WTC11 (cell line): ENCODE measurements at regions of chr3 and their contacts with region 1.

Region 1: DNA sequence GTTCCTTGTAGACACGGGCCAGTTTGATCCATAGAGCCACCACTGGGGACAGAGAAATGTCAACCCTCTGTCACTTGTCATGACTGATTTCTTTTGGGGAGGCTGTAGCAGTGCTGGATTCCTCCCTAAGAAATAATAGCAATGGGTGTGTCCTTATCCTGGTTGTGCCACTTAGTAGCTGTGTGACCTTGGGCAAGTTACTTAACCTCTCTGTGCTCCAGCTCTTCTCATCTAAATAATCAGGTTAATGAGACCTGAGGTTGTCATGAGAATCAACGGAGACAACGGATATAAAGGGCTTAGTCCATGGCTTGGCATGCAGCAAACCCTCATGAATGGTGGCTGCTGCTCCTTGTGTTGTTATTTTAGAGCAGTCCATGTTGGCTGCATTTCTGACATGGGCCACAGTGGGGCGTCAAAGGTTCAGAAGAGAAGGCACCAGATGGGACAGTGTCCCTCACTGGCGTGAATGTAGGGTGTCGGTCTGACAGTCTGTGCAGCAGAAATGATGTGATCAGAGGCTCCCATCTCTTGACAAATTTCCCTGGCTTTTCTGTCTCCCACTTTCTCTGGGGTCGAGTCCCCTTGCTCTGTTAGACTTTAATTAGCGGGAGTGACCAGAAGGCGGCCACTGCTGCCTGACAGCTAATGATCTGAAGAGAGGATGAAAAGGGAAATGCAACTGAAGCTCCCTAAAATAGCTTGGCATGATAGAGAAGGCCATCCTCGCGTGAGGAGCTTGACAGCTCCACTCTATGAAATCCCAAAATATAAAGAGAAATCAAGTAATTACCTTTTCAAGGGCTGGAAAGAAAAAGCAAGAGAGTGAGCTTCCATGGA is 209.4 kb downstream of the CADPS start:
- DNase-seq: peak; percentile 93
- ATAC-seq: peak; percentile 91
- H3K4me3 Mint-ChIP-seq: peak overlapping the region; percentile 33
- H3K27ac Mint-ChIP-seq: no peak overlapping the region
- H3K4me1 Mint-ChIP-seq: peaks cover 17% of the 10 kb centered on the region
- H3K27me3 Mint-ChIP-seq: no peaks in the 10 kb centered on the region
- CTCF ChIP-seq: peak; percentile 87

Region 2: DNA sequence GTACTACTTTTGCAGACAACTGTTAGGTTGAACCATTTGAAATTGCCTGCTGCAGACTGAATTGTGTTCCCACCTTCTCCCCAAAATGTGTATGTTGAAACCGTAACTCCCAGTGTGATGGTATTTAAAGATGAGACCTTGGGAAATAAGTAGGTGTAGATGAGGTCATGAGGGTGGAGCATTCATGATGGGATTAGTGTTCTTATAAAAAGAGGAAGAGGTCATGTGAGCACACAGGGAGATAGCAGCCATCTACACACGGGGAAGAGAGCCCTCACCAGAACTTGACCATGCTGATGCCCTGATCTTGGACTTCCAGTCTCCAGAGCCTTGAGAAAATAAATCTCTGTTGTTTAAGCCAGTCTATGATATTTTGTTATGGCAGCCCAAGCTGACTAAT is 1397.2 kb before region 1 on chr3:
- CTCF ChIA-PET with region 1: no interaction called
- POLR2A ChIA-PET with region 1: no interaction called
- DNase-seq: no peak
- ATAC-seq: no peak
- H3K4me3 Mint-ChIP-seq: no peak overlapping the region
- H3K27ac Mint-ChIP-seq: no peak overlapping the region
- H3K4me1 Mint-ChIP-seq: no peaks in the 10 kb centered on the region
- H3K27me3 Mint-ChIP-seq: no peaks in the 10 kb centered on the region
- CTCF ChIP-seq: no peak

Region 3: GRCh38 chr3:62682854-62683253 is 17.0 kb after region 1 on chr3:
- CTCF ChIA-PET with region 1: interaction called, 11 read pairs
- POLR2A ChIA-PET with region 1: no interaction called
- DNase-seq: no peak
- ATAC-seq: no peak
- H3K4me3 Mint-ChIP-seq: no peak overlapping the region
- H3K27ac Mint-ChIP-seq: no peak overlapping the region
- H3K4me1 Mint-ChIP-seq: peaks cover 33% of the 10 kb centered on the region
- H3K27me3 Mint-ChIP-seq: peaks cover 3% of the 10 kb centered on the region; the same call in 1 of the 2 replicates
- CTCF ChIP-seq: no peak

Region 4: DNA sequence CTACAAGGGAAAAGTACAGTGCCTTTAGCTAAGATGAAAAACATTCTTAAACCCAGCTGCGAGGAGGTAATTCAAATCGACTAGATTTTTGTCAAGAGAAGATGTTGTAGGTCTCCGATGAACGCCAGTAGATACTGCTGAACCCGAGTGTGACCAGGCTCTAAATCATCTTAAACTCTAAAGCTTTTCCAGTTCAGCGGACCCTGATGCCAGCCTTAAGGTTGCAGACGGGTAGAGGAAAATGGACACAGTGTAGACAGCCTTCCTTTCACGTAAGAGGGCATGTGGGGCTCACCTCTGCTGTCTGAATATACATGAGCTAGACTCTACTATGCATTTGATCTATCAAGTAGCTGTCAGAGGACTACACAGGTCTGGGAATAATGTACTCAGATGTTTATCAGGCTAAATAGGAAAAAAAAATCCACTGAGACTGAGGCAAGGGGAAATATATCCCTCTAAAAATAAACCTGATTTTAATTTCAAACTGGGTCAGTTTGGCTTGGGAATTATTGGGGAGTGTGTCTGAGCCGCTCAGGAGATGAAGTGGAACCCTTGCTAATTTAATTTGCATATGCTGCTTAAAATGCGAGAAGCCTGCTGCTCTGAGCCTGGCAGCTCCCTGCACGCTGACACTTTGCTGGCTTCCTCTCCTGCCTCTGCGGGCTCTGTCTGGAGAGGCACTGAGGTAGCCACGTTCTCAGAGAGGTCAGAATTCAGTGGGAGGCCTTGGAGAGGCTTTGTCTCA is 57.5 kb after region 1 on chr3:
- CTCF ChIA-PET with region 1: interaction called, 10 read pairs
- POLR2A ChIA-PET with region 1: no interaction called
- DNase-seq: peak; percentile 34
- ATAC-seq: peak; percentile 87
- H3K4me3 Mint-ChIP-seq: no peak overlapping the region
- H3K27ac Mint-ChIP-seq: no peak overlapping the region
- H3K4me1 Mint-ChIP-seq: peaks cover 31% of the 10 kb centered on the region
- H3K27me3 Mint-ChIP-seq: no peaks in the 10 kb centered on the region; the same call in 1 of the 2 replicates
- CTCF ChIP-seq: no peak

Region 5: DNA sequence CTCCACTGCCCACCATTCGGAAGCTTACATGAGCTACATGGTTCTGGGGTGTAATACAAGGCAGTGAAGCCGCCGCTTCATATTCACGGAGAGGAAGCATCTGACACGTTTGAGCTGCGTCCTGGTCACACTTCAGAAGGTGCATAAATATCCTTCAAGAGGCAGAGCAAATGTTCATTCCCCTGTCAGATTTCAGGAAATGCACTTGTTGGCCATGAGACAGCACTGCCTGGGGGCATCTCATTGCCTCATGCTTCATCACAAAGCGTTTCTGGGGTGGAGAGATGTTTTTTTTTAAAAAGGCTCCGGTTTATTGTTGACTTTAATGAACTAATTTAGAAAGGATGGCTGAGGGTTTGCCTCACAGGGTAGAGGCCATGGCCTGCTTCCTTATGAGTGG is 89.5 kb after region 1 on chr3:
- CTCF ChIA-PET with region 1: interaction called, 11 read pairs
- POLR2A ChIA-PET with region 1: no interaction called
- DNase-seq: no peak
- ATAC-seq: no peak
- H3K4me3 Mint-ChIP-seq: no peak overlapping the region
- H3K27ac Mint-ChIP-seq: no peak overlapping the region
- H3K4me1 Mint-ChIP-seq: no peaks in the 10 kb centered on the region
- H3K27me3 Mint-ChIP-seq: no peaks in the 10 kb centered on the region
- CTCF ChIP-seq: no peak

Region 6: DNA sequence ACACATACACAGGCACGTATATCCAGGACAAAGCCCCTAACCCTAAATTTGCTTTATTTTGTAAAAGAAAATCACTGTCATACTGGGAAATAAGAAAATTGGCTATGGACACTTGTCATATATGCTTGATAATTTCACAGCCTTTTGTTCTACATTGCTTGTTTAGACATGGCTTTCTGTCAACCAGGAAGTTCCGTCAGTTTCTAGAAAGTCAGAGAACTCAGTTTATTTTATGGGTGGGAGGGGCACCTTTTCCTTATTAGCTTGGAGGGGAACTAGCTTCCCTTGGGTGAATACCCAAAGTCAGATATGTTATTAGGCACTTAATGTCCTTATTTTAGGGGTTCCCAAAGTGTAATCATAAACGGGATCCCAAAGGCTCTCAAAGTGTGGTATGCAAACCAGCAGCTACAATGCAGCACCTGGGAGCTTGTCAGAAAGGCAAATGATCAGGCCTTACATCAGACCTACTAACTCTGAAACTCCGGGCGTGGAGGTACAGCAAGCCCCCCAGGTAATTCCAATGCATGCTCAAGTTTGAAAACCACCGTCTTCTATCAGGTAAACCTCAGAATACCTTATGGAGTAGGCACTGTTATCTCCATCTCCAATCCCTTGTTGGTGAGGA is 159.3 kb after region 1 on chr3:
- CTCF ChIA-PET with region 1: interaction called, 12 read pairs
- POLR2A ChIA-PET with region 1: no interaction called
- DNase-seq: no peak
- ATAC-seq: no peak
- H3K4me3 Mint-ChIP-seq: no peak overlapping the region
- H3K27ac Mint-ChIP-seq: no peak overlapping the region
- H3K4me1 Mint-ChIP-seq: 0 out of 2 replicates have a peak, but pooled peaks cover 3% of the 10 kb centered on the region
- H3K27me3 Mint-ChIP-seq: no peaks in the 10 kb centered on the region
- CTCF ChIP-seq: no peak

Region 7: GRCh38 chr3:62873761-62874647 is 208.2 kb after region 1 on chr3:
- CTCF ChIA-PET with region 1: interaction called, 77 read pairs
- POLR2A ChIA-PET with region 1: interaction called, 3 read pairs
- DNase-seq: peak; percentile 89
- ATAC-seq: peak; percentile 76
- H3K4me3 Mint-ChIP-seq: peak overlapping the region; percentile 78
- H3K27ac Mint-ChIP-seq: peak overlapping the region; percentile 85
- H3K4me1 Mint-ChIP-seq: peaks cover 16% of the 10 kb centered on the region
- H3K27me3 Mint-ChIP-seq: peaks cover 4% of the 10 kb centered on the region; the same call in 1 of the 2 replicates
- CTCF ChIP-seq: no peak

Region 8: GRCh38 chr3:63193629-63194028 is 527.8 kb after region 1 on chr3:
- CTCF ChIA-PET with region 1: interaction called, 35 read pairs
- POLR2A ChIA-PET with region 1: no interaction called
- DNase-seq: no peak
- ATAC-seq: peak; percentile 67
- H3K4me3 Mint-ChIP-seq: no peak overlapping the region
- H3K27ac Mint-ChIP-seq: no peak overlapping the region
- H3K4me1 Mint-ChIP-seq: peaks cover 9% of the 10 kb centered on the region
- H3K27me3 Mint-ChIP-seq: no peaks in the 10 kb centered on the region
- CTCF ChIP-seq: peak; percentile 46; the same call in 1 of the 2 replicates